Dendritic cell treated with granulocyte-macrophage colony-stimulating factor and Interleukin-4, amounts not matched to agents 40 ng/mL and 50 ng/mL, for 4 days (primary cell): ENCODE measurements at regions of chr1 and their contacts with region 1.

Region 1: DNA sequence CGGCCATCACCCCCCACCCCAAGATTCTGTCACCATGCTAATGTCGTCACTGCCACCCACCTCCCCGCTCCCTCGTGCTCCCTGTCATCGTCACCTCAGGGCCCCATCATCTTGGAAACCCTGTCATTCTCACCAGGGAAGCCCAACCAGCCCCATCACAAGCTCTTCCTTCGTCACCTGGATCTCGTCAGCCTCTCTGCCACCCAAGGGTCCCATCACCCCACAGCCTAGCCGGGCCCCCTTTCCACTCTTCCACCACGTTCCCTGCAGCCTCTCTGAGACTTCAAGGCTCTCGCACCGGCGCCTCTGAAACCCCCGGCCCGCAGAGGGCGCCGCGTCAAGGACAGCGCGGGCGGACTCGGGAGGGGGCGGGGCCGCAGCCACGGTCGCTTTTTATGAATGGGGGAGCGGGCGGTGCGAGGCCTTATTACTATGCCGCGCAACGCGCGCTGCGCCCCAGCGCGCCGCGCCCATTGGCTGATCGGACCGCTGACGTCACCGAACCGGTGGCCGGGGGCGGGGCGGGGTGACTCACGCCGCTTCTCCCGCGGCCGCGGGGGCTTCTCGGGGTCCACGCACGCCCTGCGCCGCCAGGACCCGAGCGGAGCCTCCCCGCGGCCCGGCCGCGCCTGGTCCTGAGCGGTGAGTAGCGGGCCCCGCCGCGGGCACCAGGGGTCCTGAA is at the start of gene GPR3:
- H3K4me3 Mint-ChIP-seq: peak within 1 kb of the TSS; percentile 76
- H3K27ac Mint-ChIP-seq: peak within 1 kb of the TSS; percentile 74
- H3K4me1 Mint-ChIP-seq: peaks cover 25% of the 10 kb centered on the region
- H3K27me3 Mint-ChIP-seq: peaks cover 38% of the 10 kb centered on the region

Region 2: GRCh38 chr1:27234049-27234882 is 158.0 kb before region 1 on chr1 and contains the start of gene WDTC1:
- intact Hi-C with region 1: no loop called
- H3K4me3 Mint-ChIP-seq: peak within 1 kb of the TSS; percentile 88
- H3K27ac Mint-ChIP-seq: peak within 1 kb of the TSS; percentile 84
- H3K4me1 Mint-ChIP-seq: peaks cover 39% of the 10 kb centered on the region
- H3K27me3 Mint-ChIP-seq: no peaks in the 10 kb centered on the region

Region 3: DNA sequence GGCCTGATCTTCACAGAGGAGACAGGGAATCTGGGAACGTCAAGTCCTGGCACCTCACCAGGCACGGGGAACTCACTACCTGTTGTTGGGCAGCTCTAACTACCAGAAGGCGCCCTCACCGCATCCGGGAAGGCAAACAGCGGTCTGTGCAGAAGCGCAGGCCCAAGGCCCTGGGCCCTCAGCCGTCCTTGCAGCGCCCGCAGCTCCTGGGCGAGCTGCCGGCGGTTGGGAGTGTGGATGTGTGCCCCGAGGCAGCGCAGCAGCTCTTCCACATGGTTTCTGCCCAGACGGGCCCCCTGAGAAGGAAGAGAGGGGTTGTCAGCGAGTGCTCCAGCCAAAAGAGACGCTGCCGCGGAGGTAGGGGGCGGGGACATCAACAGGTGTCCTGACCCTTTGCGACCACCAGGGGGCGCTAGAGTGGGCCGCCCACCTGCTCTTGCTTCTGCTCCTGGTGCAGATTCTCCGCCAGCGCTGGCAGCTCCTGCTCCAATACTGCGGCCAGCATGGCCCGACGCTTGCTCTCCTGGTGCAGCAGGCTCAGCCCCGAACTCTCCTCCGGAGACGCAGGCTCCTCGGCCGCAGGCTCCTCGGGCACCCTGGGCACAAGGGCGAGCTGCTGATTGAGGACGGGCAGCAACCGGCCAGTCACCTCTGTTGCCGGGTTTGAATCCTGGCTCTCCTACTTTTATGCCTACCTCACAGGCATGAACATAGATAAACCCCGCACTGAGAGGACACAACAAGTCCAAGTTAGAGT is 34.8 kb before region 1 on chr1:
- intact Hi-C with region 1: loop called (anchors 1 kb)
- H3K4me3 Mint-ChIP-seq: no peak overlapping the region
- H3K27ac Mint-ChIP-seq: no peak overlapping the region
- H3K4me1 Mint-ChIP-seq: peaks cover 35% of the 10 kb centered on the region
- H3K27me3 Mint-ChIP-seq: peaks cover 38% of the 10 kb centered on the region